ENCODE measurements at regions of chr10 and their contacts with region 1.

Region 1: DNA sequence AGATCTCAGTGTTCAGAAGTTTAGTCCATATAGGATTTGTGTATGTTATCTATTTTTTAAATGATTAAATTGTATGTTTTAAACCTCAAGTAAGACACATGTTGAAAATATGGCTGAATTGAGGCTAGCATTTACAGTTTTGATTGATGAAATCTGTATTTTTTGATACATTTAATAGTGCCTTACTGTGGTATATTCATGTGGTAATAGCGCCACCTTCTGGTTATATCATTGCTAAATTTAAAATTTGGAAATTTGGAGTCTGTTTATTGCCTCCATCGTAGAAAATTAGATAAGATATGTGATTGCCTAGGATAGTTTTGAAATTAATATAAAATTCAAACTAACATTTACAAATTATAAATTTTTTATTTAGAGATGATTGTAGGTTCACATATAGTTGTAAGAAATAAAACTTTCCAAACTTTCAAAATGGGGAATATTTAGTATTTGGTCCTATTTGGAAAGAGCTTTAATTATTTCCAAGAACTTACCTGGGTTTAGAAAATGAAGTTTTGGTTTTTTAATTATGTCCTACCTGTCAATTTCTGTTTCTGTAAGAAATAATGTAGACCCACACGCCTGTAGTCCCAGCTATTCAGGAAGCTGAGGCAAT is 19.1 kb upstream of the ARMS2 start:
- DNase-seq: peak; percentile 30
- ATAC-seq: no peak
- H3K4me3 ChIP-seq: no peak overlapping the region
- H3K27ac ChIP-seq: no peak overlapping the region
- H3K4me1 ChIP-seq: no peaks in the 10 kb centered on the region
- H3K27me3 ChIP-seq: no peaks in the 10 kb centered on the region
- CTCF ChIP-seq: peak; percentile 62
- EP300 ChIP-seq: no peak
- POLR2A ChIP-seq: no peak
- RAD21 ChIP-seq: 0 out of 2 replicates have a peak, but pooled peaks have one; percentile 56

Region 2: GRCh38 chr10:122279725-122280141 is 155.6 kb before region 1 on chr10:
- CTCF ChIA-PET with region 1: interaction called, 22 read pairs
- POLR2A ChIA-PET with region 1: no interaction called
- in situ Hi-C with region 1: no loop called
- intact Hi-C with region 1: loop called (anchors 1 kb)
- DNase-seq: peak; percentile 54
- ATAC-seq: peak; percentile 87
- H3K4me3 ChIP-seq: peak overlapping the region in 1 of 3 experiments; percentile 14; a peak in 1 of 6 replicates
- H3K27ac ChIP-seq: no peak overlapping the region
- H3K4me1 ChIP-seq: peaks cover 32% of the 10 kb centered on the region
- H3K27me3 ChIP-seq: peaks cover 5 to 18% of the 10 kb centered on the region in 2 experiments; a peak in 4 of 5 replicates
- CTCF ChIP-seq: peak; percentile 94
- EP300 ChIP-seq: no peak
- POLR2A ChIP-seq: no peak
- RAD21 ChIP-seq: peak; percentile 85

Region 3: GRCh38 chr10:122342293-122343134 is 92.8 kb before region 1 on chr10:
- CTCF ChIA-PET with region 1: interaction called, 23 read pairs
- POLR2A ChIA-PET with region 1: interaction called, 3 read pairs
- in situ Hi-C with region 1: loop called (anchors 5 kb)
- intact Hi-C with region 1: loop called (anchors 1 kb)
- DNase-seq: peak; percentile 54
- ATAC-seq: peak; percentile 64
- H3K4me3 ChIP-seq: no peak overlapping the region
- H3K27ac ChIP-seq: no peak overlapping the region
- H3K4me1 ChIP-seq: peaks cover 44% of the 10 kb centered on the region
- H3K27me3 ChIP-seq: no peaks in the 10 kb centered on the region
- CTCF ChIP-seq: peak; percentile 71
- EP300 ChIP-seq: no peak
- POLR2A ChIP-seq: no peak
- RAD21 ChIP-seq: peak; percentile 81